B cell (primary cell): ENCODE measurements at regions of chr14 and their contacts with region 1.

Region 1: DNA sequence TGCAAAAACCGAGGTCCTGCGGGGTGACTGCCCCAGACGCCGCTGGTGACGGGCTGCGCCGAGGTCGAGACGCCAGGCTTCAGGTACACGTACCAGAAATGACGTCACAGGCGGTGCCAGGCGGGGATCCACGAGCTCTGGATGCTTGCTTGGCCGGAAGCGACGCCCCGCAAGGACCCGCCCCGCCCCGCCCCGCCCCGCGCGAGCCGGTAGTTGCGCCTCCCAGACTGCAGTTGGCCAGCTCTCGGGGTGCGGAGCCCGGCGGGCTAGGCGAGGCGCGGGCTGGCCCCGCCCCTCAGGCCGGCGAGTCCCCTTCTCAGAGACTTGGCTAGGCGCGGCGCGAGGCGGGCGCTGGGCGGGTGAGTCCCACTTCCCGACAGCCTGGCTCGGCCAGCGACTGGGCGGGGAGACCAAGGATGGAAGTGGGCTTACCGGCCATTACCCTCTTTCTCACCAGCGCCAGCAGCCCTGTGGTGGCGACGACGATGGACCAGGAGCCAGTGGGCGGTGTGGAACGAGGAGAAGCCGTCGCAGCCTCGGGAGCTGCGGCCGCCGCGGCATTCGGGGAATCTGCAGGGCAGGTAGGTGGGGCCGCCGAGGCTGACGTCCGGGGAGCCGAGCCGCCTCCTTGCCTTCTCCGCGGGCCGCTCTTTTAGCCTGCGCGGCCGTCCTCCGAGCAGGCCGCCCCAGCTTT is at the start of gene FAM177A1:
- DNase-seq: peak; percentile 99
- ATAC-seq: peak; percentile 94
- H3K4me3 ChIP-seq: peak within 1 kb of the TSS; percentile 70 to 97 (median 80)
- H3K4me3 Mint-ChIP-seq: peak within 1 kb of the TSS; percentile 87
- H3K27ac ChIP-seq: peak within 1 kb of the TSS; percentile 94 to 96
- H3K27ac Mint-ChIP-seq: peak within 1 kb of the TSS; percentile 95
- H3K4me1 ChIP-seq: peaks cover 11 to 15% of the 10 kb centered on the region in 2 donors
- H3K4me1 Mint-ChIP-seq: peaks cover 26% of the 10 kb centered on the region
- H3K27me3 ChIP-seq: no peaks in the 10 kb centered on the region
- H3K27me3 Mint-ChIP-seq: no peaks in the 10 kb centered on the region
- CTCF ChIP-seq: no peak
- total RNA-seq, gene FAM177A1: 32.1 and 39.4 TPM in 2 replicates

Region 2: DNA sequence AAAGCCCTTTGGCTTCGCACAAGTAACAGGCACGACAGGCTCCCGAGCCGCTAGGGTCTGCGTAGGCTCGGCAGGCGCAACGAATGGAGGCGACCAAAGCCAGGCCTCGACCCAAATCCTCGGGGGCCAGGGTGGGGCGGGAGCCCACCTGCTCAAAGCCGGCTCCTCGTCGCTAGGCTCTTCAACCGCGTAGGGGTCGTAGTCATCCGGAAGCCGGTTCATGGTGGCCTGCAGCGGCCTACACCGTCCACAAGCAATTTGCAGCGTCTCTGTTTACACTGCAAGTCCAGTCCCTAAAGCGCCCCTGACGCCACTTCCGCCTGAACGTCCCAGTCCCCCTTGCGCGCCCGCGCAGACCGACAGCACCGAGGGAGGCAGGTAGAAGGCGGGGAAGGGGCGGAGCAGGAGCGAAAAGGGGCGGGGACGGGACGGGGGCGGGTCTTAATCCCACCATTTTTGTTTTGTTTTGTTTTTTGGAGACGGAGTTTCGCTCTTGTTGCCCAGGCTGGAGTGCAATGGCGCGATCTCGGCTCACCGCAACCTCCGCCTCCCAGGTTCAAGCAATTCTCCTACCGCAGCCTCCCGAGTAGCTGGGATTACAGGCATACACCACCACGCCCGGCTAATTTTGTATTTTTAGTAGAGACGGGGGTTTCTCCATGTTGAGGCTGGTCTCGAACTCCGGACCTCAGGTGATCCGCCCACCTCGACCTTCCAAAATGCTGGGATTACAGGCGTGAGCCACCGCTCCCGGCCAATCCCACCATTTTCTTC is 506.6 kb before region 1 on chr14 and contains the start of gene EAPP:
- CTCF ChIA-PET with region 1: no interaction called
- POLR2A ChIA-PET with region 1: no interaction called
- intact Hi-C with region 1: loop called (anchors 5 kb)
- DNase-seq: peak; percentile 96
- ATAC-seq: peak; percentile 99
- H3K4me3 ChIP-seq: peak within 1 kb of the TSS; percentile 44 to 97 (median 89)
- H3K4me3 Mint-ChIP-seq: peak within 1 kb of the TSS; percentile 99
- H3K27ac ChIP-seq: peak within 1 kb of the TSS; percentile 91 to 97
- H3K27ac Mint-ChIP-seq: peak within 1 kb of the TSS; percentile 99
- H3K4me1 ChIP-seq: peaks cover 18 to 24% of the 10 kb centered on the region in 2 donors
- H3K4me1 Mint-ChIP-seq: peaks cover 21% of the 10 kb centered on the region
- H3K27me3 ChIP-seq: no peaks in the 10 kb centered on the region
- H3K27me3 Mint-ChIP-seq: no peaks in the 10 kb centered on the region
- CTCF ChIP-seq: no peak
- total RNA-seq, gene EAPP: 54.8 and 58.0 TPM in 2 replicates

Region 3: DNA sequence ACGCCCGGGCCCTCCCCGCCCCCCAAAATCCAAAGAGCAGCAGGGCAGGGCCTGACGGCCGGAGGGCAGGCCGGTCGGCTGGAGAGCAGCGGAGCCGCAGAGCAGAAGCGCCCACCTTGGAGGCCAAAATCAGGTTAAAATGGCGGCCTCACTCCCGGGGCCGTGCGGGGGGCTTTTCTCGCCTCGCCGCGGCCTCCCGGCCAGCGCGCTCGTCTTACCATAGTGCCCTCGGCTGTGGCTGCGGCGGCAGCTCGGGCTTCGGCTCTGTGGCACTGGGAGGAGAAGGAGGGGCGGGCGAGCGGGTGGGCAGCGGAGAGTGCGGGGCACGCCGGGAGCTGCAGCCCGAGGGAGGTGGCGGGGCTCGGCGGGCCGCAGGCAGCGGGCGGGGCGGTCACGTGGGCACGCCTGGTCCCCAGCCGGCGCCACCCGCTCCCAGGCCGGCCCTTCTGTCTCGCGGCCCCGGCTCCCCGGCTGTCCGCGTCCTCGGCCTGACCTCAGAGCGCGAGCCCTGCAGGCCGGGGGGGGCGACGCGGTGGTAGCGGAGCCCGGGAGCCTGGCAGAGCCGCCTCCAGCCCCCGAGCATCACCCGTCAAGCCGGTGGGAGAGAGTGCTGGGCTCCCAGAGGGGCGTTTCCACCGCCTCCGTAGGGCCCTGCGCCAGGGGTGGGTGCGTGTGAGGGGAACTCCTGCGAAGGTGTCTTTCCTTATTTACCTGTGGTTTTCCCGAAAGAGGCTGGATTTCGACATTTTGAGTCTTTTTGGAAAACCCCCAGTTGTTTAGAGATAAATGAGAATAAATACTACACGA is 331.7 kb before region 1 on chr14 and contains the start of gene CFL2:
- CTCF ChIA-PET with region 1: no interaction called
- POLR2A ChIA-PET with region 1: no interaction called
- intact Hi-C with region 1: loop called (anchors 1 kb)
- DNase-seq: peak; percentile 86
- ATAC-seq: peak; percentile 91
- H3K4me3 ChIP-seq: peak within 1 kb of the TSS; percentile 61 to 91 (median 81)
- H3K4me3 Mint-ChIP-seq: peak within 1 kb of the TSS; percentile 94
- H3K27ac ChIP-seq: peak within 1 kb of the TSS; percentile 75 to 87
- H3K27ac Mint-ChIP-seq: peak within 1 kb of the TSS; percentile 94
- H3K4me1 ChIP-seq: peaks cover 11 to 15% of the 10 kb centered on the region in 2 donors
- H3K4me1 Mint-ChIP-seq: peaks cover 29% of the 10 kb centered on the region
- H3K27me3 ChIP-seq: no peaks in the 10 kb centered on the region
- H3K27me3 Mint-ChIP-seq: no peaks in the 10 kb centered on the region
- CTCF ChIP-seq: no peak
- total RNA-seq, gene CFL2: 21.9 and 25.2 TPM in 2 replicates

Region 4: GRCh38 chr14:35121887-35122695 is 75.9 kb after region 1 on chr14 and contains the starts of genes PPP2R3C and PRORP:
- CTCF ChIA-PET with region 1: no interaction called
- POLR2A ChIA-PET with region 1: interaction called, 17 read pairs
- intact Hi-C with region 1: loop called (anchors 1 kb)
- DNase-seq: peak; percentile 97
- ATAC-seq: peak; percentile 89
- H3K4me3 ChIP-seq: peak within 1 kb of the TSS; percentile 70 to 97 (median 77)
- H3K4me3 Mint-ChIP-seq: peak within 1 kb of the TSS; percentile 100
- H3K27ac ChIP-seq: peak within 1 kb of the TSS; percentile 94 to 100
- H3K27ac Mint-ChIP-seq: peak within 1 kb of the TSS; percentile 99
- H3K4me1 ChIP-seq: peaks cover 19 to 24% of the 10 kb centered on the region in 2 donors
- H3K4me1 Mint-ChIP-seq: peaks cover 53% of the 10 kb centered on the region
- H3K27me3 ChIP-seq: no peaks in the 10 kb centered on the region
- H3K27me3 Mint-ChIP-seq: no peaks in the 10 kb centered on the region
- CTCF ChIP-seq: no peak
- total RNA-seq, gene PPP2R3C: 40.8 and 41.7 TPM in 2 replicates
- total RNA-seq, gene PRORP: 16.4 and 22.2 TPM in 2 replicates

Region 5: DNA sequence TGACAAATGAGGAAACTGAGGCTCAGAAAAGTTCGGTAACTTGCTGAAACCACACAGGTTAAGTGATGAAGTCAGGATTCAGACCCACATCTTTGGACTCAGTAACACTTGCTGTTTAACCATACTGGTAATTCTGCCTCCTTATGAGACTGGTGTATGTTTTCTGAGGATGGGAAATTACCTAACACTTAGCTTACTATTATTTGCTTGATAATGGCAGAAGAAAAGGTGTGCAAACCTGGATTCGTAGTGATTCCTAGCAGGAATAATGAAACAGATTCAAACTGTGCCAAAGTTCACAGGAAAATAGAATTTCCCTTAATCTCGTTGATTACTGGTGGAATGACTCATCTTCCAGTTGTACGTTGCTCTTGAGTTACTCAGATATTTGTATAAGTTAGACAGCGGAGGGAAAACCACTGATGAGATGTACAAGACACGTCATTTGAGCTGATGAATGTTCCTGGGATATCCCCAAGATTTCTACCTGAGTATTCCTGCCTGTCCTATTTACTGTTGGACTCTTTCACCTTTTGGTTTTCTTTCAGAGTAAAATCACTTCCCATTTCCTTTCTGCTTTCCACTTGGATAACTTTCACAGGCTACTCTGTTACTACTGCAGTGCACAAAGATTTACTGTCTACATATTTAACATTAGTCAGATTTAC is 113.7 kb after region 1 on chr14:
- CTCF ChIA-PET with region 1: no interaction called
- POLR2A ChIA-PET with region 1: no interaction called
- intact Hi-C with region 1: no loop called
- DNase-seq: no peak
- ATAC-seq: no peak
- H3K4me3 ChIP-seq: no peak overlapping the region
- H3K4me3 Mint-ChIP-seq: no peak overlapping the region
- H3K27ac ChIP-seq: no peak overlapping the region
- H3K27ac Mint-ChIP-seq: no peak overlapping the region
- H3K4me1 ChIP-seq: peaks cover 5 to 9% of the 10 kb centered on the region in 2 donors
- H3K4me1 Mint-ChIP-seq: peaks cover 28% of the 10 kb centered on the region
- H3K27me3 ChIP-seq: no peaks in the 10 kb centered on the region
- H3K27me3 Mint-ChIP-seq: no peaks in the 10 kb centered on the region
- CTCF ChIP-seq: no peak

Region 6: DNA sequence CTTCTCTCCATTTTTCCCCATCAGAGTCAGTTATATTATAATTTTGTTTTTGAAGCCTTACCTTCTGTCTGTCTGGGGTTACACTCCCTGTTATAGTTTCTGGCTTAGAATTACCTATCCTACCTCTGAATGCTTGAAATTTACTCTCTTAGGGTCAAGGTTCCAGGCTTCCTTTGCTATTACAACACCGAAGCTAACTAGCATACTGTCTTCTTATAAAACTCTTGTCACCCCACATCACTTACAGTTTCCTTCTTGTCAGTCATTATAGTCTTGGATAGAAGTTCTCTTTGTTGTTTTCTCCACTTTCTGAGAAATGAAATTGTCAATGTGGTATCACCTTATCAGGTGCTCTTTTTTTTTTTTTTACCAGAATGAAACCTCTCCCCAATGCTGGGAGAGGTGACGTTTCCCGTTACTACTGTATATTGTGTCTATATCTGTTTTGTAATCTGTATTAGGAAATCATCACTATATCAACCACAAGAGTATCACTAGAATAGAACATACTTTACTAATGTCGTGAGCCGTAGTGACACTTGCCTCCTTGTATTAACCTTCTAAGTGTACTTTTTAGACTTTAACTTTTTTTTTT is 176.8 kb after region 1 on chr14:
- CTCF ChIA-PET with region 1: no interaction called
- POLR2A ChIA-PET with region 1: no interaction called
- intact Hi-C with region 1: no loop called
- DNase-seq: no peak
- ATAC-seq: no peak
- H3K4me3 ChIP-seq: no peak overlapping the region
- H3K4me3 Mint-ChIP-seq: no peak overlapping the region
- H3K27ac ChIP-seq: no peak overlapping the region
- H3K27ac Mint-ChIP-seq: no peak overlapping the region
- H3K4me1 ChIP-seq: no peaks in the 10 kb centered on the region
- H3K4me1 Mint-ChIP-seq: no peaks in the 10 kb centered on the region
- H3K27me3 ChIP-seq: no peaks in the 10 kb centered on the region
- H3K27me3 Mint-ChIP-seq: no peaks in the 10 kb centered on the region
- CTCF ChIP-seq: no peak

Region 7: GRCh38 chr14:35533357-35534207 is 487.4 kb after region 1 on chr14 and contains the start of gene INSM2:
- CTCF ChIA-PET with region 1: no interaction called
- POLR2A ChIA-PET with region 1: no interaction called
- intact Hi-C with region 1: loop called (anchors 10 kb)
- DNase-seq: peak; percentile 57
- ATAC-seq: peak; percentile 65
- H3K4me3 ChIP-seq: peak within 1 kb of the TSS in 4 of 5 experiments; percentile 43 to 67 (median 62)
- H3K4me3 Mint-ChIP-seq: peak within 1 kb of the TSS; percentile 87
- H3K27ac ChIP-seq: no peak within 1 kb of the TSS
- H3K27ac Mint-ChIP-seq: no peak within 1 kb of the TSS
- H3K4me1 ChIP-seq: peaks cover 21 to 23% of the 10 kb centered on the region in 2 donors
- H3K4me1 Mint-ChIP-seq: peaks cover 18% of the 10 kb centered on the region
- H3K27me3 ChIP-seq: peaks cover 3 to 35% (median 34%) of the 10 kb centered on the region in 4 experiments
- H3K27me3 Mint-ChIP-seq: peaks cover 57% of the 10 kb centered on the region
- CTCF ChIP-seq: no peak
- total RNA-seq, gene INSM2: not detected in 2 replicates

Region 8: DNA sequence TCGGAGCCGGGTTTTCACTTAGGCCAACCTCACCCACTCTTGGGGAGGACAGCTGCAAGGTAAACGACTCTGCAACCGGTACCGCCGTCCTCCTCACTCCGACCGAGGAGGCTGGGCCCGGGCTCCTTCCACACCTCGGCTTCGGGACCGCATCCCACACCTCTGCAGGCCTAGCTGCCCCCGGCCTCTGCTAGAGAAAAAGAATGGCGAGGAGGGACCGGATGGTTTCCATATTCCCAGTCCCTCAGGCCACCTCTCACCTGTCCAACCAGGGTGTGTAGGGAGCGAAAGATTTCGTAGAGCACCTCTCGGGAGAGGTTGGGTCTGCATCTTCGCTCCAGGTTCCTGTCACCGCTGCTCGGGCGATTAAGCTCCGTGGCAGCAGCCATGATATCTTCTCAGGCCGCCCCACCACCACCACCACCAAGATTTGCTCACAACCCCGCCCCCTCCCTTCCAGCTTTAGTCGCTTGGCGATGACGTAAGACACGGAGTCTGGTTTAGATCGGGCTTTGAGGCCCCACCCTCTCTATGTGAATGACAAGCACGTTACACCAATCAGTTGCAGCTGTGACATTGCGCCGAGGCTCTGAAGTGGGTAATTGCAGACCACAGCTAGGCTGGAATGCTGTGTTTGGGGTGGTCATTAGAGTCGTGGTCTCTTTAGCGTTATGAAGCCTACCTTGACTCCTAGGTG is 1274.2 kb after region 1 on chr14 and contains the start of gene MBIP:
- CTCF ChIA-PET with region 1: no interaction called
- POLR2A ChIA-PET with region 1: interaction called, 6 read pairs
- intact Hi-C with region 1: loop called (anchors 5 kb)
- DNase-seq: peak; percentile 94
- ATAC-seq: peak; percentile 97
- H3K4me3 ChIP-seq: peak within 1 kb of the TSS; percentile 70 to 92 (median 84)
- H3K4me3 Mint-ChIP-seq: peak within 1 kb of the TSS; percentile 99
- H3K27ac ChIP-seq: peak within 1 kb of the TSS; percentile 30 to 75
- H3K27ac Mint-ChIP-seq: peak within 1 kb of the TSS; percentile 90
- H3K4me1 ChIP-seq: peaks cover 5% of the 10 kb centered on the region in 2 donors
- H3K4me1 Mint-ChIP-seq: peaks cover 18% of the 10 kb centered on the region
- H3K27me3 ChIP-seq: peaks cover 0 to 7% (median 0%) of the 10 kb centered on the region in 4 experiments
- H3K27me3 Mint-ChIP-seq: peaks cover 18% of the 10 kb centered on the region
- CTCF ChIP-seq: no peak
- total RNA-seq, gene MBIP: 17.3 and 20.8 TPM in 2 replicates